CD4-positive, alpha-beta T cell (primary cell): ENCODE measurements at regions of chr12 and their contacts with region 1.

Region 1: DNA sequence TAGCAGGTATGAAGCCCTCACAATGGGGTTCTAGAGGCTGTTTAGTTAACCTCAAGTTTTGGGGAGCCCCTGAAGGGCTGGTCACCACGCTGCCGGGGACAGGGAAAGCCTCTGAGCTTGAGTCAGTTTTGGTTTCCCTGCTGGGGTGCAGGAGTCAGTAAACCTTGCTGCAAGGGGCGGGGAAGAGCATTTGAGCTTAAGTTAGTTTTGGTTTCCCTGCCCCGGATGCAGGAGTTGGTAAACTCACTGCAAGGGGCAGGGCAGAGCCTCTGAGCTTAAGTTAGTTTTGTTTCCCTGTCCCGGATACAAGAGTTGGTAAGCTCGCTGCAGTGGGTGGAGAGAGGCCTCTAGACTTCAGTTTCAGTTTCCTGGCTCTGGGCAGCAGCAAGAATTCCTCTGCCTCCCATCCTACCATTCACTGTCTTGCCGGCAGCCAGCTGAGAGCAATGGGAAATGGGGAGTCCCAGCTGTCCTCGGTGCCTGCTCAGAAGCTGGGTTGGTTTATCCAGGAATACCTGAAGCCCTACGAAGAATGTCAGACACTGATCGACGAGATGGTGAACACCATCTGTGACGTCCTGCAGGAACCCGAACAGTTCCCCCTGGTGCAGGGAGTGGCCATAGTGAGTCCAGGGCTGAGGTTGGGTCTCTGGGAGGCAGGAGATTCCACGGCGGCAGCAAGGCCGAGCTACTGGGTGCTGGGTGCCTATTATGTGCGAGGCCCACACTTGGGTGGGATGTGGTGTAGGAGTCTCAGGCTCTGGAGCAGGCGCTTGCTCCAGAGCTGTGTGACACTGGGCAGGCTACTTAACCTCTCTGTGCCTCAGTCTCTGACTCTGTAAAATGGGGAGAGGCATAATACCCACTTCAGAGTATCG is at the start of gene OAS2:
- DNase-seq: peak; percentile 56 to 94 (median 74)
- ATAC-seq: peak; percentile 91
- H3K4me3 ChIP-seq: peak within 1 kb of the TSS; percentile 87
- H3K4me3 Mint-ChIP-seq: peak within 1 kb of the TSS; percentile 100
- H3K27ac ChIP-seq: peak within 1 kb of the TSS; percentile 86 to 90
- H3K27ac Mint-ChIP-seq: peak within 1 kb of the TSS; percentile 99
- H3K4me1 ChIP-seq: peaks cover 26% of the 10 kb centered on the region
- H3K4me1 Mint-ChIP-seq: peaks cover 61% of the 10 kb centered on the region
- H3K27me3 ChIP-seq: no peaks in the 10 kb centered on the region
- H3K27me3 Mint-ChIP-seq: no peaks in the 10 kb centered on the region
- CTCF ChIP-seq: no peak
- total RNA-seq, gene OAS2: 15.0 to 16.2 TPM

Region 2: GRCh38 chr12:112906712-112907414 is 71.5 kb before region 1 on chr12 and contains the start of gene OAS1:
- CTCF ChIA-PET with region 1: interaction called, 3 read pairs
- POLR2A ChIA-PET with region 1: interaction called, 61 read pairs
- intact Hi-C with region 1: loop called (anchors 2 to 5 kb)
- DNase-seq: peak in 8 of 14 experiments; percentile 13 to 78 (median 50)
- ATAC-seq: peak; percentile 71
- H3K4me3 ChIP-seq: peak within 1 kb of the TSS; percentile 66
- H3K4me3 Mint-ChIP-seq: peak within 1 kb of the TSS; percentile 87
- H3K27ac ChIP-seq: peak within 1 kb of the TSS; percentile 59 to 66
- H3K27ac Mint-ChIP-seq: peak within 1 kb of the TSS; percentile 82
- H3K4me1 ChIP-seq: peaks cover 57% of the 10 kb centered on the region
- H3K4me1 Mint-ChIP-seq: peaks cover 94% of the 10 kb centered on the region
- H3K27me3 ChIP-seq: no peaks in the 10 kb centered on the region
- H3K27me3 Mint-ChIP-seq: no peaks in the 10 kb centered on the region
- CTCF ChIP-seq: no peak
- total RNA-seq, gene OAS1: 2.6 to 3.4 TPM

Region 3: GRCh38 chr12:112963227-112963867 is 15.1 kb before region 1 on chr12:
- CTCF ChIA-PET with region 1: no interaction called
- POLR2A ChIA-PET with region 1: interaction called, 10 read pairs
- intact Hi-C with region 1: no loop called
- DNase-seq: no peak
- ATAC-seq: no peak
- H3K4me3 ChIP-seq: no peak overlapping the region
- H3K4me3 Mint-ChIP-seq: no peak overlapping the region
- H3K27ac ChIP-seq: no peak overlapping the region
- H3K27ac Mint-ChIP-seq: no peak overlapping the region
- H3K4me1 ChIP-seq: no peaks in the 10 kb centered on the region
- H3K4me1 Mint-ChIP-seq: peaks cover 8% of the 10 kb centered on the region
- H3K27me3 ChIP-seq: no peaks in the 10 kb centered on the region
- H3K27me3 Mint-ChIP-seq: no peaks in the 10 kb centered on the region
- CTCF ChIP-seq: no peak

Region 4: DNA sequence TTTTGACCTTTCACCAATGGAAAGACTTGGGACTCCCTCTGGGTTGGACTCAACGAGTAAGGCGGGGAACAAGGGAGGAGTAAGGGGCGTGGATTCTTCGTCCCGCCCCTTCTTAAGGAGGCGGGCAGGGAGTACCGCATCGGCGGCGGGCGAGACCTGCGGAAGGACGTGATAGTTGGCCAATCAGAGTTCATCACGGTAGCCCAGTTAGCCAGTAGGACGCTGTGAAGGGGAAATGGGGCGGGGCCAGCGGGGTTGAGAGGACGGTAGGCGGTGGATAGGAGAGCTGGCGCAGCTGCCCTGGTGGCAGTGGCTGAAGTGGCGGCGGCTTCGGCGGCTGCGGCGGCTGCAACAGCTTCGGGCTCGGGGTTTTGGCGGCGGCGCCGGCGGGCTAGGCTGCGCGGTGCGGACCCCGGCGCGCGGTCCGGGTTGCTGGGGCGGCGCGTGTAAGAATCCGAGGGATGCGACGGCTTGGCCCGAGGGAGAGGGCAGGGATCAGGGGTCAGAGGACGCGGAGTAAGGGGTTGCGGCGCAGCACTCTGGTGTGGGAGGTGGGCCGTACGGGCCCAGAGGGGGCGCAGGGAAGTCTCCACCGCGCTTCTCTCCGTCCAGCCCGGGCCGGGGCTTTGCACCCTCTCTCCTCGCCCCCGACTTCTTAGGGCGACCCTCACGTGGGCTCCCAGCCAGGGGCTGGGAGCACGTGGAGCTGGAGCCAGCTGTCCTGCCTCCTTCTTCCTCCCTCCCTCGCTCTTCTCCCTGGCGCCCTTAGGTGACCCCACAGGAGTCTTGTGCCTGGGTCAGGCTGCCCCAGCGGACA is 243.0 kb after region 1 on chr12 and contains the start of gene TPCN1:
- CTCF ChIA-PET with region 1: no interaction called
- POLR2A ChIA-PET with region 1: interaction called, 13 read pairs
- intact Hi-C with region 1: no loop called
- DNase-seq: peak; percentile 97 to 100 (median 98)
- ATAC-seq: peak; percentile 91
- H3K4me3 ChIP-seq: peak within 1 kb of the TSS; percentile 91
- H3K4me3 Mint-ChIP-seq: peak within 1 kb of the TSS; percentile 92
- H3K27ac ChIP-seq: peak within 1 kb of the TSS; percentile 61 to 74
- H3K27ac Mint-ChIP-seq: peak within 1 kb of the TSS; percentile 77
- H3K4me1 ChIP-seq: peaks cover 45% of the 10 kb centered on the region
- H3K4me1 Mint-ChIP-seq: peaks cover 47% of the 10 kb centered on the region
- H3K27me3 ChIP-seq: no peaks in the 10 kb centered on the region
- H3K27me3 Mint-ChIP-seq: no peaks in the 10 kb centered on the region
- CTCF ChIP-seq: no peak
- total RNA-seq, gene TPCN1: 52.4 to 59.7 TPM

Region 5: DNA sequence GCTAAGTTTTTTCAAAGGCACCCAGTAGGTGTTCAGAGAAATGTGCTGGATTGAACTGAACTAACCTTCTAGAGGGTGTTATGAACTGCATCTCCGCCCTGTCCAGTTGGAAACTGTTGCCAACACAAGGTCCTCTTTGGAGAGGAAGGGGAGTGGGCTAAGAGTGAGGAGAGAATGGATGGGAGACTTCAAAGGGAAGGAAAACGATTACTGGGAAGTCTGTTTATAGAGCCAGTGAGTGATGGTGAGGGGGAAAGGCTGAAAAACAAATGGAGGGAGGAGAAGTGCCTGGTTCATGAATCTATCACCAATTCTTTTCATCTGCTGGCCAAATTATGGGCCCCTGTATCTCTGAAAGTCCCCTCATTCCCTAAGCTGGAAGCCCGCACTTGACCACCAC is 1513.5 kb after region 1 on chr12:
- CTCF ChIA-PET with region 1: no interaction called
- POLR2A ChIA-PET with region 1: no interaction called
- intact Hi-C with region 1: no loop called
- DNase-seq: no peak
- ATAC-seq: no peak
- H3K4me3 ChIP-seq: no peak overlapping the region
- H3K4me3 Mint-ChIP-seq: no peak overlapping the region
- H3K27ac ChIP-seq: no peak overlapping the region
- H3K27ac Mint-ChIP-seq: no peak overlapping the region
- H3K4me1 ChIP-seq: no peaks in the 10 kb centered on the region
- H3K4me1 Mint-ChIP-seq: no peaks in the 10 kb centered on the region
- H3K27me3 ChIP-seq: peaks cover 0 to 8% of the 10 kb centered on the region in 2 experiments
- H3K27me3 Mint-ChIP-seq: peaks cover 58% of the 10 kb centered on the region
- CTCF ChIP-seq: no peak